Dorsolateral prefrontal cortex (tissue), 120 donors: ENCODE measurements at regions of chr1 and their contacts with region 1.

Region 1: GRCh38 chr1:83857103-83857502 is 141.8 kb downstream of the TTLL7 start:
- DNase-seq: no peak
- H3K4me3 ChIP-seq: peak overlapping the region in 6 of 59 donors; percentile 4 to 45 (median 20)
- H3K27ac ChIP-seq: no peak overlapping the region
- H3K27me3 ChIP-seq: peaks cover 0 to 3% (median 0%) of the 10 kb centered on the region in 45 donors
- CTCF ChIP-seq: peak in 54 of 56 donors; percentile 37 to 80 (median 55)

Region 2: DNA sequence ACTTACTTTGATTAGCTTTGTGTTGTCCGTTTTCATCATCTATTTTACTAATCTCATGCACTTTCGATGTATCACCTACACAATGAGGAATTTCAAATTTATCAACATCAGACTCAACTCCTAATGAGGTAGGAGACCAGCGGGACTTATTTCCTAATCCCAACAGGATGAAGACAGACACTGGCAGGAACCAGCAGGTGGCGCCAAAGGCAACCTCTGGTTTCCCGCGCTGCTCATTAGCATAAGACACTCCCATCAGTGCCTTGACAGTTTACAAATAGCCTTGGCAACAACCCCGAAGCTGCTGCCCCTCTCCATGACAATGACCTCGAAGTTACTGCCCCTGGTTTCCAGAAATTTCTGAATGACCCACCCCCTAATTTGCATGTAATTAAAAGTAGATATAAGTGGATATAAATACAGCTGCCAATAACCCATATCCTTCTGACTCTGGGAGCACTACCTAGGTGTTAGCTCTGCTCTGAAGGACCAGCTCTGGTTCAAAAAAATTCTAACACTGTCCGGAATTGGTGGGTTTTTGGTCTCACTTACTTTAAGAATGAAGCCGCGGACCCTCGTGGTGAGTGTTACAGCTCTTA is 1081.6 kb before region 1 on chr1:
- intact Hi-C with region 1: loop called in 1 of 2 experiments (anchors 10 kb)
- DNase-seq: peak in 9 of 10 donors; percentile 22 to 81 (median 53)
- H3K4me3 ChIP-seq: no peak overlapping the region
- H3K27ac ChIP-seq: no peak overlapping the region
- H3K27me3 ChIP-seq: no peaks in the 10 kb centered on the region
- CTCF ChIP-seq: peak in 55 of 56 donors; percentile 16 to 79 (median 60)

Region 3: GRCh38 chr1:83942914-83943313 is 85.8 kb after region 1 on chr1:
- intact Hi-C with region 1: no loop called
- DNase-seq: no peak
- H3K4me3 ChIP-seq: no peak overlapping the region
- H3K27ac ChIP-seq: peak overlapping the region in 22 of 59 donors; percentile 5 to 84 (median 32)
- H3K27me3 ChIP-seq: no peaks in the 10 kb centered on the region
- CTCF ChIP-seq: no peak

Region 4: GRCh38 chr1:84260864-84261518 is 403.9 kb after region 1 on chr1:
- intact Hi-C with region 1: no loop called
- DNase-seq: no peak
- H3K4me3 ChIP-seq: no peak overlapping the region
- H3K27ac ChIP-seq: no peak overlapping the region
- H3K27me3 ChIP-seq: no peaks in the 10 kb centered on the region
- CTCF ChIP-seq: no peak